ENCODE measurements at regions of chr1 and their contacts with region 1.

Region 1: GRCh38 chr1:26853156-26853555 is 9.8 kb upstream of the SFN start:
- DNase-seq: peak; percentile 85
- ATAC-seq: peak; percentile 89
- H3K4me3 ChIP-seq: no peak overlapping the region
- H3K4me3 Mint-ChIP-seq: no peak overlapping the region
- H3K27ac ChIP-seq: no peak overlapping the region
- H3K27ac Mint-ChIP-seq: no peak overlapping the region
- H3K4me1 ChIP-seq: no peaks in the 10 kb centered on the region
- H3K4me1 Mint-ChIP-seq: no peaks in the 10 kb centered on the region
- H3K27me3 ChIP-seq: no peaks in the 10 kb centered on the region
- H3K27me3 Mint-ChIP-seq: no peaks in the 10 kb centered on the region
- CTCF ChIP-seq: peak; percentile 87

Region 2: DNA sequence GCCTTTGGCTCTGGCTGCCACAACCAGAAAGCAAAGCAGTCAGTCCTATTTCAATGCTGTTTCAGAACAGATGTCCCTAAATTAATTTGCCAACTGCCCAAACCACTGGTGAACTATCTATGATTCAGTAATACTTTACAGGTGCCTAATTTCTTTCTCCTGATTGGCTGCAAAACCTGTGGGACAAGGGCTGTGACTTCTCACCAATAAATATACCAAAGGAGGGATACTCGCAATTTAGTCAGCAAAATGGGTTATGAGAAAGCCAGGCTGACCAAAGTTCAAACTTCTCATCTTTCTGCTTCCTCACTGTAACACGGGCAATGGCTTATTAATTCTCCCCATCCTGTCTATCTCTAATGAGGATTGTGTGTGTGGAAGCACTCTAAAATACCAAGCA is 24.2 kb after region 1 on chr1:
- CTCF ChIA-PET with region 1: interaction called, 32 read pairs
- POLR2A ChIA-PET with region 1: no interaction called
- intact Hi-C with region 1: loop called (anchors 1 kb)
- DNase-seq: no peak
- ATAC-seq: no peak
- H3K4me3 ChIP-seq: no peak overlapping the region
- H3K4me3 Mint-ChIP-seq: no peak overlapping the region
- H3K27ac ChIP-seq: no peak overlapping the region
- H3K27ac Mint-ChIP-seq: no peak overlapping the region
- H3K4me1 ChIP-seq: peaks cover 0 to 3% of the 10 kb centered on the region in 2 donors
- H3K4me1 Mint-ChIP-seq: peaks cover 3% of the 10 kb centered on the region
- H3K27me3 ChIP-seq: no peaks in the 10 kb centered on the region
- H3K27me3 Mint-ChIP-seq: no peaks in the 10 kb centered on the region
- CTCF ChIP-seq: no peak

Region 3: GRCh38 chr1:26882696-26883463 is 29.7 kb after region 1 on chr1:
- CTCF ChIA-PET with region 1: interaction called, 32 read pairs
- POLR2A ChIA-PET with region 1: no interaction called
- intact Hi-C with region 1: loop called (anchors 1 kb)
- DNase-seq: no peak
- ATAC-seq: no peak
- H3K4me3 ChIP-seq: no peak overlapping the region
- H3K4me3 Mint-ChIP-seq: no peak overlapping the region
- H3K27ac ChIP-seq: no peak overlapping the region
- H3K27ac Mint-ChIP-seq: no peak overlapping the region
- H3K4me1 ChIP-seq: peaks cover 0 to under 1% of the 10 kb centered on the region in 2 donors
- H3K4me1 Mint-ChIP-seq: peaks cover 8% of the 10 kb centered on the region
- H3K27me3 ChIP-seq: no peaks in the 10 kb centered on the region
- H3K27me3 Mint-ChIP-seq: no peaks in the 10 kb centered on the region
- CTCF ChIP-seq: no peak

Region 4: DNA sequence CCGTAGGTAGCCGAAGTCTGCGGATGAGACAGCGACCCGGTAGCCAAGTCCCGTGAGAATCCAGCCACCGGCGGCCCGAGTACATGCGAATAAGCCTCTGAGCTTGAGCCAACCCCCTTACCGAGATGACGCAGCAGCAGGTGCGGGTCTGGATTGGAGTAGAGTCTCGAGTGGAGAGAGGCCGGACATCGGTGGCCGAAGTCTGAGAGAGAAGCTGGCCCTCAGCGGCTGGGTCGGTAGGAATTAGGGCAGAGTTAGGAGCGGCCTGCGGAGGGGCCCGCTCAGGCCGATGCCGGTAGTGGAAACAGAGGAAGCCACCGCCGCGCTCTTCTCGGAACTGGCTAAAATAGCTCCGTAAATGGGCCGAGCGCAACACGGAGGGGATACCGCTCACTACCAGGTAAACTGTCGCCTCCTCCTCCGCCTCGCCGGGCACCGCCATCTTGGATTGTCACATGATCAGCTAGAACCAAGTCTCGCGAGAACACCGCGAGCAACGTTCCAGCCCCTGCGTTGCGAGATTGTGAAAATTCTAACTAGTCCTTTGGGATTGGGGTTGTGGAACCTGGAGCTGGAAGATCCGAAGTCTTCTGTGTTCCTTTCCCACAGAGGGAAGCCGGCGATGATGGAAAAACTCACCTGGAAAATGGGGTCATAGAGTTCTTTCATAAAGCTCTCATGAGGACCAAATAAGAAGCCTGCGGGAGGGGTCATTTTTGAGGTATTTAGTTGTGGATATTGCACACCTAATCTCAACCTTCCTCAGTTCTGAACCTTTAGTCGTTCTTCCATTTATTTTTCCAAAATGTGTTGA is 47.1 kb after region 1 on chr1 and contains the start of gene GPATCH3:
- CTCF ChIA-PET with region 1: no interaction called
- POLR2A ChIA-PET with region 1: no interaction called
- intact Hi-C with region 1: loop called (anchors 1 kb)
- DNase-seq: peak; percentile 94
- ATAC-seq: peak; percentile 92
- H3K4me3 ChIP-seq: peak within 1 kb of the TSS; percentile 84 to 100 (median 97)
- H3K4me3 Mint-ChIP-seq: peak within 1 kb of the TSS; percentile 92
- H3K27ac ChIP-seq: peak within 1 kb of the TSS; percentile 82 to 92
- H3K27ac Mint-ChIP-seq: peak within 1 kb of the TSS; percentile 99
- H3K4me1 ChIP-seq: peaks cover 16 to 20% of the 10 kb centered on the region in 2 donors
- H3K4me1 Mint-ChIP-seq: peaks cover 36% of the 10 kb centered on the region
- H3K27me3 ChIP-seq: no peaks in the 10 kb centered on the region
- H3K27me3 Mint-ChIP-seq: no peaks in the 10 kb centered on the region
- CTCF ChIP-seq: no peak
- total RNA-seq, gene GPATCH3: 21.9 and 28.6 TPM in 2 replicates